ENCODE measurements at regions of chr14 and their contacts with region 1.

Region 1: GRCh38 chr14:59189786-59190771 is 1.6 kb downstream of the DAAM1 start:
- DNase-seq: peak; percentile 88
- ATAC-seq: peak; percentile 9
- H3K4me3 Mint-ChIP-seq: peak overlapping the region; percentile 93
- H3K27ac Mint-ChIP-seq: peak overlapping the region; percentile 63
- H3K4me1 Mint-ChIP-seq: peaks cover 13% of the 10 kb centered on the region
- H3K27me3 Mint-ChIP-seq: peaks cover 6% of the 10 kb centered on the region

Region 2: DNA sequence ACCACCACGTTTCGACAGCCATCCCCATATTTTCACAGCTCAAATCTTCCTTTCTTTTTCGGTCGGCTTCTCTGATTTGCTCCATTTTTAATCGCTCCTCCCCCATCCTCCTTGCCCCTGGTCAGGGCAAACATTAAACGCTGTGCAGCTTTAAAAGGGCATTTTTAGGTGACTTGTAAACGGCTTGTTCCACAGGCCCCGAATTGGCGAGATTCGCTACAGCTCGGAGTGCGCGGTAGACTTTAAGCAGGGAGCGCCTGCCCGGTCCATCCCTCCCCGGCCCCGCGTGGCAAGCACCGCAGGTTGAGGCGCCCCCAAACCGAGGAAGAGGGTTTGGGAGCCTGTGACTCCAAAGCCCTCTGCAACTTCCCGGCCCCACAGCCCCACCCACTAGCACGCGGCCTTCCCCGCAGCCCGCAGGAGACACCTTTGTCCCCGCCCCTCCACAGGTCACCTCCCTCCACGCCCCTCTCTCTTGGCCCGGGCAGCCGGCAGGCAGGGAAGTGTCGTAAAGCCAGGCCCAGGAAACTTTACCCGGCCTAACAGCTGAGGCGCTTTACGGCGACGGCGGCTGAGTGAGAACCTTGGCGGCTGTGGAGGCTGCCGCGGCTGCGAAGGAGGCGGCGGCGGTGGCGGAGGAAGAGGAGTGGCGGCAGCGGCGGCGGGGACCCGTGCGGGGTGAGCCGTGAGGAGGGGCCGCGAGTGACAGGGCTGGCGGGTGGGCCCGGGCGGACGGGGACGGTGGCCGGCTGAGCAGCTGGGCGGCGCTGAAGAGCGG is 1799.9 kb before region 1 on chr14 and contains the start of gene NAA30:
- CTCF ChIA-PET with region 1: no interaction called
- POLR2A ChIA-PET with region 1: no interaction called
- intact Hi-C with region 1: loop called in 1 of 2 experiments (anchors 10 kb)
- DNase-seq: peak; percentile 96
- ATAC-seq: peak; percentile 91
- H3K4me3 Mint-ChIP-seq: peak within 1 kb of the TSS; percentile 81
- H3K27ac Mint-ChIP-seq: peak within 1 kb of the TSS; percentile 93
- H3K4me1 Mint-ChIP-seq: peaks cover 37% of the 10 kb centered on the region
- H3K27me3 Mint-ChIP-seq: no peaks in the 10 kb centered on the region
- total RNA-seq, gene NAA30: 14.2 to 17.6 TPM

Region 3: GRCh38 chr14:58637391-58638230 is 552.5 kb before region 1 on chr14 and contains the start of gene DACT1:
- CTCF ChIA-PET with region 1: no interaction called
- POLR2A ChIA-PET with region 1: no interaction called
- intact Hi-C with region 1: loop called (anchors 5 kb)
- DNase-seq: peak; percentile 80
- ATAC-seq: peak; percentile 69
- H3K4me3 Mint-ChIP-seq: peak within 1 kb of the TSS; percentile 76
- H3K27ac Mint-ChIP-seq: peak within 1 kb of the TSS; percentile 85
- H3K4me1 Mint-ChIP-seq: peaks cover 41% of the 10 kb centered on the region
- H3K27me3 Mint-ChIP-seq: peaks cover 12% of the 10 kb centered on the region
- total RNA-seq, gene DACT1: 8.8 to 8.9 TPM

Region 4: GRCh38 chr14:58919217-58919616 is 270.9 kb before region 1 on chr14:
- CTCF ChIA-PET with region 1: no interaction called
- POLR2A ChIA-PET with region 1: no interaction called
- intact Hi-C with region 1: no loop called
- DNase-seq: no peak
- ATAC-seq: no peak
- H3K4me3 Mint-ChIP-seq: no peak overlapping the region
- H3K27ac Mint-ChIP-seq: no peak overlapping the region
- H3K4me1 Mint-ChIP-seq: no peaks in the 10 kb centered on the region
- H3K27me3 Mint-ChIP-seq: peaks cover 11% of the 10 kb centered on the region

Region 5: DNA sequence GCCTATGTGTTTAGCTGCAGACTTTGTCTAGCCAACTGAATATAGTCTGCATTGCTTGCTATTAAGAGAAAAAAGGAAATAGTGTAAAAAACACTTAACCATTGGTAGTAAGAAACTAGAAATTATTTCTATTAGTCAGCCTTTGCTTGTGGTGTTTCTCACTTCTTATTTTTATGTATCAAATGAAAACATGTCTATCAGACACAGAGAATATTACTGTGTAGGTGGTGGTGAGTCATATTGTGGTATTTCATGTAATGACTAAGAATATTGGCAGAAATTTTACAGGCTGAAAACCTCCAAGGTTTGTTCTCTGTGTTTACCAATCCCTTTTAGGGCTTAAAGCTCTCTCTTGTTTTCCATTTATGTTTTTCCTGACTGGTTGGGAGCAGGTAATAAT is 85.6 kb after region 1 on chr14:
- CTCF ChIA-PET with region 1: no interaction called
- POLR2A ChIA-PET with region 1: no interaction called
- intact Hi-C with region 1: loop called (anchors 1 to 5 kb)
- DNase-seq: no peak
- ATAC-seq: peak; percentile 79
- H3K4me3 Mint-ChIP-seq: no peak overlapping the region
- H3K27ac Mint-ChIP-seq: no peak overlapping the region
- H3K4me1 Mint-ChIP-seq: peaks cover 19% of the 10 kb centered on the region
- H3K27me3 Mint-ChIP-seq: no peaks in the 10 kb centered on the region

Region 6: DNA sequence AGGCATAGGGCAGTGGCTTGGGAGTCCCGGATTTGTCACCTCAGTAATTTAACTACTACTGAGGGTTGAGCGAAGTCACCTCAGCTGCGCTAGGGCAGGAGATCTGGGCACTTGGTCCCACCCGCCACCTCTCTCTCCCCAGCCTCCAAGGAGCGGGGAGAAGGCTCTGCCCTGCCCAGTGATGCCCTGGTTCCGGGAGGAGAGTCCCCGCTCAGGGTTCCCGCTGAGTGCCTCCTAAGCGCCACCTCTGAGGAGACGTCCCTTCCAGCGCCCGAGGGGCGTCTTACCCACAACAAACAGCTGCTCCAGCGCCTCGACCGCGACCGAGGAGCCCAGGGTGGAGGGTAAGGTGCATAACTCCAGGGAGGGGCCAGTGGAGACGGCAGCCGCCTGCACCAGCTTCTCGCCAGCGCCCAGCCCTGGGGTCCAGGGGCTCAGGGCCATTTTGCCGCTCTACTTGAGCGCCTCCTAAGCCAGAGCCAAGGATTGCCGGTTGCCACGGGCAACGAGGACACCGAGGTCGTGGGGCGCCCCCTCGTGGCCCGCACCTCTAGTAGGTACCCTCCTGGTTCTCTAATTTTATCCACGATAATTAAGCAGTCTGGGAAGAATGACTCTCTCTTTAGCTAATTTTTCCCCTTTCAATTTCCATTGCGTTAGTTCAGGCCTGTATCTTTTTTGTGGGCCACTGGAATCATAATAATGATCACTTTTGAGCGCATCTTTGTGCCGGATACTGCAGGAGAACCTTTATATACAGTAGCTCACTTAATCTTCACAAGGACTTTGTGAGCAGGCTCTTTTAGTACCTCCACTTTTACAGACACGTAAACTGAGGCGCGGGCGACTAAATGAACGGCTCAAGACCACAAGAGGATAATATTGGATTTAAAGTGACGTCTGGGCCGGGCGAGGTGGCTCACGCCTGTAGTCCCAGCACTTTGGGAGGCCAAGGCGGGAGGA is 386.5 kb after region 1 on chr14 and contains the start of gene CCDC175:
- CTCF ChIA-PET with region 1: no interaction called
- POLR2A ChIA-PET with region 1: no interaction called
- intact Hi-C with region 1: loop called in 1 of 2 experiments (anchors 5 kb)
- DNase-seq: peak; percentile 93
- ATAC-seq: peak; percentile 99
- H3K4me3 Mint-ChIP-seq: peak within 1 kb of the TSS; percentile 68
- H3K27ac Mint-ChIP-seq: no peak within 1 kb of the TSS
- H3K4me1 Mint-ChIP-seq: peaks cover 7% of the 10 kb centered on the region
- H3K27me3 Mint-ChIP-seq: peaks cover 12% of the 10 kb centered on the region
- total RNA-seq, gene CCDC175: not detected

Region 7: GRCh38 chr14:60164712-60165546 is 974.9 kb after region 1 on chr14 and contains the start of gene DHRS7:
- CTCF ChIA-PET with region 1: no interaction called
- POLR2A ChIA-PET with region 1: no interaction called
- intact Hi-C with region 1: loop called in 1 of 2 experiments (anchors 5 kb)
- DNase-seq: peak; percentile 79
- ATAC-seq: peak; percentile 88
- H3K4me3 Mint-ChIP-seq: peak within 1 kb of the TSS; percentile 99
- H3K27ac Mint-ChIP-seq: peak within 1 kb of the TSS; percentile 99
- H3K4me1 Mint-ChIP-seq: peaks cover 41% of the 10 kb centered on the region
- H3K27me3 Mint-ChIP-seq: no peaks in the 10 kb centered on the region
- total RNA-seq, gene DHRS7: 27.9 to 46.3 TPM

Measured in activated CD4-positive, alpha-beta T cell treated with anti-CD3 and anti-CD28 coated beads for 36 hours (primary cell).